ENCODE measurements at regions of chr3 and their contacts with region 1.

Region 1: DNA sequence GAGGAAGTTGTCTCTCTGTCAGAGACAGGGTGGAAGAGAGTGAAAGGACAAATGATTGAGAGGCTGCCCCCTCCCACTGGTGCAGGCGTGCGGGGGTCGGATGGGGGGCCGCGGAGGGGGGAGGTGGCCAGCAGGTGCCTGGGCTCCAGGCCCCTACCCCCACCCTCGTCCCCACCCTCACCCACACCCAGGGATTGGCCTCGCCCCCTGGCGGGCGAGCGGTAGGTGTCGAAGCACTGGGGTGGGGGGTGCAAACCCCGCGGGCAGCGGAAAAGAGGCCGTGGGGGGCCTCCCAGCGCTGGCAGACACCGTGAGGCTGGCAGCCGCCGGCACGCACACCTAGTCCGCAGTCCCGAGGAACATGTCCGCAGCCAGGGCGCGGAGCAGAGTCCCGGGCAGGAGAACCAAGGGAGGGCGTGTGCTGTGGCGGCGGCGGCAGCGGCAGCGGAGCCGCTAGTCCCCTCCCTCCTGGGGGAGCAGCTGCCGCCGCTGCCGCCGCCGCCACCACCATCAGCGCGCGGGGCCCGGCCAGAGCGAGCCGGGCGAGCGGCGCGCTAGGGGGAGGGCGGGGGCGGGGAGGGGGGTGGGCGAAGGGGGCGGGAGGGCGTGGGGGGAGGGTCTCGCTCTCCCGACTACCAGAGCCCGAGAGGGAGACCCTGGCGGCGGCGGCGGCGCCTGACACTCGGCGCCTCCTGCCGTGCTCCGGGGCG is at the start of gene KAT2B:
- DNase-seq: peak; percentile 81 to 88 (median 84)
- H3K4me3 ChIP-seq: peak within 1 kb of the TSS; percentile 71 to 99
- H3K4me3 Mint-ChIP-seq: peak within 1 kb of the TSS; percentile 93 to 99 (median 98)
- H3K27ac ChIP-seq: peak within 1 kb of the TSS; percentile 86
- H3K27ac Mint-ChIP-seq: peak within 1 kb of the TSS; percentile 96 to 99 (median 98)
- H3K4me1 ChIP-seq: peaks cover 51% of the 10 kb centered on the region
- H3K4me1 Mint-ChIP-seq: peaks cover 36 to 64% (median 48%) of the 10 kb centered on the region in 4 donors
- H3K27me3 ChIP-seq: no peaks in the 10 kb centered on the region
- H3K27me3 Mint-ChIP-seq: no peaks in the 10 kb centered on the region
- total RNA-seq, gene KAT2B: 81.3 to 85.9 TPM

Region 2: DNA sequence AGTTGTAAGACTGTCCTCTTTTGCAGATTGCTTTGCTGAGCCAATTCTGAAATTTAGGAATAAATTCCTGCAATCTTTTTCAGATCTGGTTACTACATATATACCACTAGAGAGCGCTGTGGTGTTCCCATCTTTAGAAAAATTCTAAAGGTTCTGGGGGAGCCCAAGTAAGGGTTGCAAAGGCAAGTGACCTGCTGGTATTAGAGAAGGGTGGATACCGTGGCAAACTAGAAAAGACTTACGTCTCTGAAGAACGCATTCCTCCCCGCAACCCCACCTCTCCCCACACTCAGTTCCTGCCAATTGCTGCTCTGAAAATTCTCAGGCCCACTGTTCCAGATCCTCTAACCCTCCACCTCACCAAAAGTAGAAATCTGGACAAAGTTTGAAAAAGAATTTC is 154.5 kb before region 1 on chr3:
- CTCF ChIA-PET with region 1: interaction called, 3 read pairs
- POLR2A ChIA-PET with region 1: no interaction called
- intact Hi-C with region 1: loop called (anchors 1 kb)
- DNase-seq: peak in 4 of 5 donors; percentile 9 to 22 (median 18)
- H3K4me3 ChIP-seq: no peak overlapping the region
- H3K4me3 Mint-ChIP-seq: no peak overlapping the region
- H3K27ac ChIP-seq: no peak overlapping the region
- H3K27ac Mint-ChIP-seq: no peak overlapping the region
- H3K4me1 ChIP-seq: no peaks in the 10 kb centered on the region
- H3K4me1 Mint-ChIP-seq: no peaks in the 10 kb centered on the region
- H3K27me3 ChIP-seq: no peaks in the 10 kb centered on the region
- H3K27me3 Mint-ChIP-seq: peaks cover 0 to 2% of the 10 kb centered on the region in 2 donors

Region 3: GRCh38 chr3:20054549-20054987 is 14.6 kb after region 1 on chr3:
- CTCF ChIA-PET with region 1: interaction called, 36 read pairs
- POLR2A ChIA-PET with region 1: interaction called, 35 read pairs
- intact Hi-C with region 1: loop called (anchors 2 kb)
- DNase-seq: peak; percentile 52 to 93 (median 65)
- H3K4me3 ChIP-seq: no peak overlapping the region
- H3K4me3 Mint-ChIP-seq: no peak overlapping the region
- H3K27ac ChIP-seq: peak overlapping the region; percentile 48
- H3K27ac Mint-ChIP-seq: no peak overlapping the region
- H3K4me1 ChIP-seq: peaks cover 80% of the 10 kb centered on the region
- H3K4me1 Mint-ChIP-seq: peaks cover 25 to 45% (median 31%) of the 10 kb centered on the region in 4 donors
- H3K27me3 ChIP-seq: no peaks in the 10 kb centered on the region
- H3K27me3 Mint-ChIP-seq: no peaks in the 10 kb centered on the region

Region 4: DNA sequence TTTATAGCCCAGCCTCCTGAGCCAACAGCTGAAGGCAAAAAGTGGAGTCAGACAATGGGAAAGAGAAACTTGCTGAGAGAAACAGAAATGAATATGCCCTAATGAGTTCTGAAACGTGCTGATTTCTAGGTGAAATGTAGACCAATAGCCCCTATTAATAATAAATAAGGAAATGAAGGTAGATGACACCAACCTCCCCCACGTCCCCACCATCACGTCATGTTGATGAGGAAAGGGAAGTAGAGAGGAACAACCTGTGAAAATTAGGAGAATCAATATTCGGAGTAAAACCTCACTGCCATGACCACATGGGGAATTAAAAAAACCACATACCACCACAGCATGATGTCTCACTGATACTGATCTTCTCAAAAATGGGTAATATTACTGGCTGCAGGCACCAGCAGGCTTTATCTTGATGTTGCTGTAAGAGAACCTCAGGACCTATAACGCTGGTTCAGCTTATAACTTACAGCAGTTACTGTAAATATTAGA is 64.3 kb after region 1 on chr3:
- CTCF ChIA-PET with region 1: interaction called, 8 read pairs
- POLR2A ChIA-PET with region 1: interaction called, 29 read pairs
- intact Hi-C with region 1: loop called (anchors 5 kb)
- DNase-seq: peak; percentile 59 to 77 (median 77)
- H3K4me3 ChIP-seq: no peak overlapping the region
- H3K4me3 Mint-ChIP-seq: peak overlapping the region; percentile 43 to 94 (median 74)
- H3K27ac ChIP-seq: peak overlapping the region; percentile 56
- H3K27ac Mint-ChIP-seq: peak overlapping the region; percentile 91 to 98 (median 94)
- H3K4me1 ChIP-seq: peaks cover 95% of the 10 kb centered on the region
- H3K4me1 Mint-ChIP-seq: peaks cover 50 to 92% (median 63%) of the 10 kb centered on the region in 4 donors
- H3K27me3 ChIP-seq: no peaks in the 10 kb centered on the region
- H3K27me3 Mint-ChIP-seq: no peaks in the 10 kb centered on the region